Right cardiac atrium (tissue), 5 donors: ENCODE measurements at regions of chr9 and their contacts with region 1.

Region 1: GRCh38 chr9:129495534-129496325 is 125.2 kb downstream of the C9orf50 start:
- DNase-seq: peak; percentile 96 to 99 (median 99)
- ATAC-seq: peak; percentile 88
- H3K4me3 ChIP-seq: peak overlapping the region; percentile 76
- H3K27ac ChIP-seq: peak overlapping the region; percentile 95
- H3K4me1 ChIP-seq: peaks cover 2% of the 10 kb centered on the region
- H3K27me3 ChIP-seq: no peaks in the 10 kb centered on the region

Region 2: GRCh38 chr9:129139993-129140396 is 355.7 kb before region 1 on chr9:
- intact Hi-C with region 1: loop called in 2 of 4 experiments (anchors 5 to 10 kb)
- DNase-seq: peak; percentile 94 to 96 (median 95)
- ATAC-seq: peak; percentile 79 to 81
- H3K4me3 ChIP-seq: peak overlapping the region; percentile 3
- H3K27ac ChIP-seq: peak overlapping the region; percentile 96
- H3K4me1 ChIP-seq: peaks cover 26% of the 10 kb centered on the region
- H3K27me3 ChIP-seq: no peaks in the 10 kb centered on the region

Region 3: DNA sequence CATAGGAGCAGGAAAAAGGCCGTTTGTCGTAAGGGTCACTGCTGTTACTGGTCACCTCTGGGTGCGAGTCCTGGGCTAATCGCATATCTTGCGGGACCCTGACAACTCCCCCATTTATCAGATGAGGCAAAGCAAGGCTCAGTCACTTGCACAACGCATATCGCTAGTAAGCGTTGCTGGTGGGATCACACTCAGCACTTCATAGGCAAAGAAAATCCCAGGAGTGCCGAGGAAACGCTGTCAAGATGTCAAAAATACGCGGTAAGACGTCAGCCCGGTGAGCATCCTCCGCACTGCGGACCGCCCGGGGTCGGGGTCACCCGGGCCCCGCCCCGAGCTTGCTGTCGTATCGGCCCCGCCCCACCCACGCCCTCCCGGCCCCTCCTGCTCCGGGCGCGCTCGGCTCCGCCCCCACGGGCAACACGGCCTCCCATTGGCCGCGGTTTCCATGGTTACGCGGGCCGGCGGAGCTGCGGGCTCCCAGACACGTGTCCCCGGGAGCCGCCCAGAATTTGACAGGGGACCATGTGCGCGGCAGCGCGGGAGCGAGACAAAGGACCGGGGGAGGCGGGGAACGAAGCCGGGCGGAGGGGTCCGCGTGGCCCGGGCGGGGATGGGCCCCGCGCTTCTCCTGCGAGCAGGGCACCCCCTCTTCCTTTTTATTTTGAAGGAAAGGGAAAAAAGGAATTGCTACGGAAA is 237.5 kb before region 1 on chr9:
- intact Hi-C with region 1: loop called in 1 of 4 experiments (anchors 10 kb)
- DNase-seq: peak; percentile 97 to 98 (median 98)
- ATAC-seq: peak; percentile 91 to 95
- H3K4me3 ChIP-seq: peak overlapping the region; percentile 36
- H3K27ac ChIP-seq: peak overlapping the region; percentile 22
- H3K4me1 ChIP-seq: peaks cover 5% of the 10 kb centered on the region
- H3K27me3 ChIP-seq: no peaks in the 10 kb centered on the region

Region 4: GRCh38 chr9:129473523-129474229 is 22.1 kb before region 1 on chr9:
- intact Hi-C with region 1: no loop called
- DNase-seq: peak; percentile 76 to 82 (median 78)
- ATAC-seq: peak; percentile 72 to 86
- H3K4me3 ChIP-seq: no peak overlapping the region
- H3K27ac ChIP-seq: no peak overlapping the region
- H3K4me1 ChIP-seq: no peaks in the 10 kb centered on the region
- H3K27me3 ChIP-seq: no peaks in the 10 kb centered on the region

Region 5: DNA sequence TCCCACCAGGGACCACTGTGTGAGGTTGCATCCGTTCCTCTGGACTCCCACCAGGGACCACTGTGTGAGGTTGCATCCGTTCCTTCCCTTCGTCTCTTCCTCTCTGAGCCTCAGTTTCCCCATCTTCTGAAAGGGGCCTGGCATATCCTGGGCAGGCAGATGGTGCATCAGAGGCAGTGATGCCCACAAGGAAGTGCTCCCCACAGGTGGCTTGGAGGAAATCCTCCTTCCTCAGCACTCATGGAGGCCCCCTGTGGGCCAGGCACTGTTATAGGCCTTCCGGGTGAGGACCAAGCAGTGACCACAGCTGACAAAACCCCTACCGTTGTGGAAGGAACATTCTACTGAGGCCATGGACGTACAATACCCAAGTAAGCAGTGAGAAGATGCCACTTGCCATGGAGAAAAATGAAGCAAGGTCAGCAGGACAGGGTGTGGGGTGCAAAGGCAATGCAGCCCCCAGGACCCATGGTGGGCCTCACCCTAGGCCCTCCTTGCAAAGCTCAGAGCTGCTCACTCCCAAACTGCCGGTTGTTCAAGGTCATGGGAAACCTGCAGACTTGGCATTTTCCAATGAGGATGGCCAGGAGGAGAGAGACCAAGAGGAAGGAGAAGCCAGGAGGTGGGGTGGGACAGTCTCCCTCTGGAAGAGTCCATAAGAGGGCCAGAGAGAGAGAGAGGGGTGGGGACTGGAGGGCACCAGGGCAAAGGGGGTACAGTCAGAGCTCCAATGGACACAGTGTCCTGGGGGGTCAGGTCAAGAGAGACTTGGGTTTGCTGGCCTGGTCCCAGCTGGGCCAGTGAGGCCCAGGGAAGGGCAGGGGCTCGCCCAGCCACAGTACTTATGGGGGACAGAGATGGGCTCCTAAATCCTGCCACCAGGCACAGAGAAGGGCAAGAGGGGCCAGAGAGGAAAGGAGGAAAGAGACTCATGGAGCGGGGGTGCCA is 74.0 kb after region 1 on chr9:
- intact Hi-C with region 1: loop called in 1 of 4 experiments (anchors 10 kb)
- DNase-seq: peak in 1 of 3 donors; percentile 61
- ATAC-seq: peak; percentile 12 to 25
- H3K4me3 ChIP-seq: no peak overlapping the region
- H3K27ac ChIP-seq: peak overlapping the region; percentile 48
- H3K4me1 ChIP-seq: peaks cover 8% of the 10 kb centered on the region
- H3K27me3 ChIP-seq: no peaks in the 10 kb centered on the region

Region 6: DNA sequence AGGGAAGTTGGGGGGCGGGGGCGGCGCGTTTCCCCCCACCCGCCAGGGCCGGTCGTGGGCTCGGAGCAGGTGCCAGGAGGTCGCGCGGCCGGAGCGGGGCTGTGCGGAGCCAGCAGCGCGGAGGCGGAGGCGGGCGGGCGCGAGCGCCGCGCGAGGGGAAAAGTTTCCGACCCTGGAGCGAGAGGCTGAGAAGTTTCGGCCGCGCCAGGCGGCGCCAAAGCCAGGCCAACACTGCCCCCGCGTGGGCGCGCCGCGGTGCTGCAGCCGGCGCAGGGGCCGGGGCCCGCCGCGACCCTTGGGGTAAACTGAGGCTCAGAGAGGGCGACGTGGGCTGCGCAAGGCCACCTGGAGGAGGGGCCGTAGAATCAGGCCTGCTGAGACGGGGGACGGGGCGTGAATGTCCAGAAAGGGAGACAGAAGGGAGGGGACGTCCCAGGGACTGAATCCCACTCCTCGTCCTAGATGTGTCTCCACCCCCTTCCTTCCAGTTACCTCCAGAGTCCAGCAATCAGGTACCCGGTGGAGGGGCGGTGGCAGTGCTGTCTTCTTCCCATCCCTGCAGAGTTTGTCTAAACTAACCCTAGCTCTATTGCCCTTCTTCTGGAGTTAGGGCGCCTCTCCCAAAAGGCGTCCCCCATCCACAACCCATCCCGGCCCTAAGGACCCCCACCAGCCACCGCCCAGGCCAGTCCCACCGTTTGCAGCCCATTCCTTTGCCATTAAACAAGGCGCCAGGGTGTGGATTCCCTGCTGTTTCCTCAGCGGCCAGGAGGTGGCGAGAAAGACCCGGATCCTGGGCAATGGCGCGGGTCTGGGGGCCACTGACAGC is 115.0 kb after region 1 on chr9:
- intact Hi-C with region 1: loop called in 3 of 4 experiments (anchors 5 to 10 kb)
- DNase-seq: peak; percentile 81 to 94 (median 93)
- ATAC-seq: peak; percentile 33 to 61
- H3K4me3 ChIP-seq: peak overlapping the region; percentile 66
- H3K27ac ChIP-seq: peak overlapping the region; percentile 78
- H3K4me1 ChIP-seq: peaks cover 3% of the 10 kb centered on the region
- H3K27me3 ChIP-seq: no peaks in the 10 kb centered on the region